Transverse colon (tissue), 4 donors: ENCODE measurements at regions of chr6 and their contacts with region 1.

Region 1: GRCh38 chr6:1396952-1397868 is 7.8 kb downstream of the FOXF2 start:
- DNase-seq: peak; percentile 76
- H3K4me3 ChIP-seq: peak overlapping the region in 1 of 4 donors; percentile 4
- H3K27ac ChIP-seq: peak overlapping the region; percentile 82 to 88 (median 86)
- H3K4me1 ChIP-seq: peaks cover 0 to 8% (median 0%) of the 10 kb centered on the region in 4 donors
- H3K27me3 ChIP-seq: peaks cover 82% of the 10 kb centered on the region
- CTCF ChIP-seq: peak; percentile 83 to 97 (median 96)
- EP300 ChIP-seq: peak; percentile 53
- POLR2A ChIP-seq: no peak

Region 2: DNA sequence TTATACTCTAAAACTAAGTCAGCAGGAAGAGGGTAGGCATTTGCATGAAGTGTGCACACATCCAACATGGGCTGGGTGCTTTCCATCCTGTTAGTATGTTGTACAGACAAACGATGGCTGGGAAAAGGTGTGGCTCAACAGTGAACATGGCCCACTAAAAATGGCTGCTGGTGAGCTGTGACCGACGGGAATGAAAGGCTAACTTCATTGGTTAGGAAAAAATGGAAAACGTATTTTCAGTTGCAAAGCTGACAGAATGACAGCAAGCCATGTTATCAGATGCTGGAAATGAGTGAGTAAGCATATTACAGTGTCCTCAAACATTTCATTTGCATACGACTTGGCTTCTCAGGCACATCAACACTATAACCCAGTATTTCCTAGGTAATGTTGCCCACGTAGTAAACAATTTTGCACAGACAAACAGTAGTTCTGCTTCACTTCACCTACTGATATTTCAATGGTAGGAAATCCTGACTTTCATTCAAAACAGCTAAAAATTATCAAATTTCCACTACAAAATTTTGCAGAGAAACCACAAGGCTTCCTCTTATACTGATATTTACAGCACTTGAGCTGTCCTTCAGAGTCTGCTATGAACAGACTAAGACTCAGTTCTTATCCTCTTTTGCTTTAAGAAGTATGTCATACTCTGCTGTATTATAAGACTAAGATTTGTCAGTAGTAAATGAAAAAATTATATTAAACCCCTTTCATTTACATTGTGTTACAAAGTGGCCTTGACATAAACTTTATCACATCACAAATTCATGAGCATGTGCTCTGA is 906.8 kb before region 1 on chr6:
- in situ Hi-C with region 1: no loop called
- intact Hi-C with region 1: no loop called
- DNase-seq: no peak
- H3K4me3 ChIP-seq: no peak overlapping the region
- H3K27ac ChIP-seq: no peak overlapping the region
- H3K4me1 ChIP-seq: peaks cover 0 to 5% (median 0%) of the 10 kb centered on the region in 4 donors
- H3K27me3 ChIP-seq: no peaks in the 10 kb centered on the region
- CTCF ChIP-seq: no peak
- EP300 ChIP-seq: no peak
- POLR2A ChIP-seq: no peak

Region 3: DNA sequence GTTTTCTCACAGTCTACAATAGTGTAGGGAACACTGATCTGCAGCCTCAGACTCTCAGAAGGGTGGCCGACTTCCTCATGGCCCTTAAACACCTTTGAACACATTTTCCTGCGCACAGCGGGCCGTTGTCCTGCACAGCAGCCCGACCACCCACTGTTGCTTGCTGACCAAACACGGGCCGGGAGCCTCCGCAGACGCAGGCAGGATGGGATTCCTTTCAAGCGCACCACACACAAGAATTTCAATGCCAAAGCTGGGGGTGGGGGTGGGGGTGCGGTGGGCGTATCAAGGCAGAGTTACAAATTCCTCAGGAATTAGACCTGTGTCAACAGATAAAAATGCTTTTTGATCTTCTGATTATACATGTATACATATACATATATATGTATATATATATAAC is 814.8 kb before region 1 on chr6:
- in situ Hi-C with region 1: loop called in 2 of 4 experiments (anchors 10 kb)
- intact Hi-C with region 1: no loop called
- DNase-seq: no peak
- H3K4me3 ChIP-seq: no peak overlapping the region
- H3K27ac ChIP-seq: peak overlapping the region; percentile 14 to 51 (median 27)
- H3K4me1 ChIP-seq: no peaks in the 10 kb centered on the region
- H3K27me3 ChIP-seq: no peaks in the 10 kb centered on the region
- CTCF ChIP-seq: no peak
- EP300 ChIP-seq: no peak
- POLR2A ChIP-seq: no peak

Region 4: DNA sequence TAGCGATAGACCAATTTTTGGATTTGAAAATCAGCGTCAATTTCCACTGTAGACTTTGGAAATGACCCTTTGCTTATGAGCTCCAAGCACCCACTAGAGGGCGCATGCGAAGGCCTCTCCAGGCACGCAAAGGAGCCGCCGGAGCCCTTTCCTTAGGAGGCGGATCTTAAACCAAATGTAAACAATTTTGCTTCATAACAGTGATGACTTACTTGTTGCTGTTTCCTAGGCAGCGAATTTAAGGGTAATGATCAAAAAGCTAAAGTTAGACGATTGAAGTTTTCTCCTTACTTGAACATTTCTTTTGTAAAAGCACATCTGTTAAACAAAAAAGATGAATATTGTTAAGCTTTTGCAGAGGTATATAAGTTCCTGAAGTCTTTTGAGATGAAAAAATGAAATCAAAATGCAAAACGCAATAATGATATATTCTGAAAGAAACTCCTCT is 675.1 kb before region 1 on chr6:
- in situ Hi-C with region 1: loop called in 1 of 4 experiments (anchors 25 kb)
- intact Hi-C with region 1: no loop called
- DNase-seq: peak; percentile 81
- H3K4me3 ChIP-seq: no peak overlapping the region
- H3K27ac ChIP-seq: peak overlapping the region in 1 of 4 donors; percentile 18
- H3K4me1 ChIP-seq: peaks cover 0 to 8% (median 0%) of the 10 kb centered on the region in 4 donors
- H3K27me3 ChIP-seq: peaks cover 2% of the 10 kb centered on the region
- CTCF ChIP-seq: peak; percentile 70 to 91 (median 87)
- EP300 ChIP-seq: no peak
- POLR2A ChIP-seq: no peak

Region 5: GRCh38 chr6:878187-878586 is 519.0 kb before region 1 on chr6:
- in situ Hi-C with region 1: no loop called
- intact Hi-C with region 1: no loop called
- DNase-seq: no peak
- H3K4me3 ChIP-seq: no peak overlapping the region
- H3K27ac ChIP-seq: no peak overlapping the region
- H3K4me1 ChIP-seq: no peaks in the 10 kb centered on the region
- H3K27me3 ChIP-seq: no peaks in the 10 kb centered on the region
- CTCF ChIP-seq: no peak
- EP300 ChIP-seq: no peak
- POLR2A ChIP-seq: no peak

Region 6: GRCh38 chr6:912871-913835 is 484.1 kb before region 1 on chr6:
- in situ Hi-C with region 1: loop called in 1 of 4 experiments (anchors 25 kb)
- intact Hi-C with region 1: no loop called
- DNase-seq: peak; percentile 21
- H3K4me3 ChIP-seq: no peak overlapping the region
- H3K27ac ChIP-seq: no peak overlapping the region
- H3K4me1 ChIP-seq: no peaks in the 10 kb centered on the region
- H3K27me3 ChIP-seq: peaks cover 17% of the 10 kb centered on the region
- CTCF ChIP-seq: peak in 4 of 5 experiments; percentile 24 to 55 (median 37)
- EP300 ChIP-seq: no peak
- POLR2A ChIP-seq: no peak